ENCODE measurements at regions of chr21 and their contacts with region 1.

Region 1: GRCh38 chr21:32653311-32653901 is 41.2 kb upstream of the CFAP298 start:
- DNase-seq: peak in 3 of 4 donors; percentile 31 to 36 (median 32)
- ATAC-seq: peak; percentile 76
- H3K4me3 ChIP-seq: no peak overlapping the region
- H3K27ac ChIP-seq: no peak overlapping the region
- H3K4me1 ChIP-seq: no peaks in the 10 kb centered on the region
- H3K27me3 ChIP-seq: no peaks in the 10 kb centered on the region
- CTCF ChIP-seq: peak; percentile 21 to 75 (median 67)
- POLR2A ChIP-seq: no peak

Region 2: DNA sequence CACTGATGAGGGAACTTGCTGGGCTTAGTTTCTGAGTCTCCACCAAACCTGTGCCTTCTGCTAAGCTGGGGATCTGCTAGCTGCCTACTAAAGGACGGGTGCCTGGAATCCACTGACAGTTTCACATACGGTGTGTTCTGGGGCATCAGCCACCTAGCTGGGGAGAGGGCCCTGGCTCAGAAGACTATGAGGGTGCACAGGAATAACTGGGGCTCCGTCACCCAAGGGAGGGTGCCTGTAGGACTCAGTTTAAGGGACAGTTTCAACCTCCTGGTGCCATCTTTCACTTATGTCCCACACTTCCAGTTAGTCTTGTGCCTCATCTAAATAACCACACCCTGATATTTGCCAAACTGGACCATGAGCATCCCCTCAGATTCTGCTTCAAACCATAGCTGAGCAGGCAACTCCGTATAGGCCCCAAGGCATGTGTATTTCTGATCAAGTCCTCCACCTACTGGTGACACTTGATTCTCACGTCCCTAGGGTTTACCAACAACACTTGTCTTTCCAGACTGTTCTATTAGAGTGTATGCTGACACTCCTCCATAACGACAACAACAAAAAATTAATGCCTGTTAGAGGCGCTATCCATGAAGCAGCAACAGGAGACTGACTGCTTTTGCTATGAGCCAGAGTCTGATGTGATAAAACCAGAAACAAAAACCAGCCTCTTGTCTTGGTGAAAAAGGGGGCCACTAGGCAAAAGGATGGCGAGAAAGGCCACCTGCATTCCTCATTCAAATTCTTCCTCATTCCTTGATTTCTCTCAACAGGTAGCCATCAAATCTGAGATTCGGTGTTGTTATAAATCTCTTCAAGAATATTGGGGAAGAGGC is 173.1 kb after region 1 on chr21:
- intact Hi-C with region 1: loop called (anchors 10 kb)
- DNase-seq: peak; percentile 26 to 63 (median 44)
- ATAC-seq: peak; percentile 74
- H3K4me3 ChIP-seq: no peak overlapping the region
- H3K27ac ChIP-seq: no peak overlapping the region
- H3K4me1 ChIP-seq: no peaks in the 10 kb centered on the region
- H3K27me3 ChIP-seq: no peaks in the 10 kb centered on the region
- CTCF ChIP-seq: peak; percentile 16 to 76 (median 59)
- POLR2A ChIP-seq: no peak

Region 3: GRCh38 chr21:32900814-32901213 is 247.4 kb after region 1 on chr21:
- intact Hi-C with region 1: no loop called
- DNase-seq: no peak
- ATAC-seq: no peak
- H3K4me3 ChIP-seq: no peak overlapping the region
- H3K27ac ChIP-seq: no peak overlapping the region
- H3K4me1 ChIP-seq: no peaks in the 10 kb centered on the region
- H3K27me3 ChIP-seq: no peaks in the 10 kb centered on the region
- CTCF ChIP-seq: no peak
- POLR2A ChIP-seq: no peak